Ascending aorta (tissue), 2 donors: ENCODE measurements at regions of chr13 and their contacts with region 1.

Region 1: GRCh38 chr13:51286135-51287002 is 53.1 kb upstream of the SERPINE3 start:
- DNase-seq: peak; percentile 15 to 87
- H3K4me3 ChIP-seq: no peak overlapping the region
- H3K27ac ChIP-seq: no peak overlapping the region
- H3K4me1 ChIP-seq: peaks cover 0 to 2% of the 10 kb centered on the region in 2 donors
- H3K27me3 ChIP-seq: no peaks in the 10 kb centered on the region
- CTCF ChIP-seq: peak; percentile 74 to 95 (median 88)

Region 2: DNA sequence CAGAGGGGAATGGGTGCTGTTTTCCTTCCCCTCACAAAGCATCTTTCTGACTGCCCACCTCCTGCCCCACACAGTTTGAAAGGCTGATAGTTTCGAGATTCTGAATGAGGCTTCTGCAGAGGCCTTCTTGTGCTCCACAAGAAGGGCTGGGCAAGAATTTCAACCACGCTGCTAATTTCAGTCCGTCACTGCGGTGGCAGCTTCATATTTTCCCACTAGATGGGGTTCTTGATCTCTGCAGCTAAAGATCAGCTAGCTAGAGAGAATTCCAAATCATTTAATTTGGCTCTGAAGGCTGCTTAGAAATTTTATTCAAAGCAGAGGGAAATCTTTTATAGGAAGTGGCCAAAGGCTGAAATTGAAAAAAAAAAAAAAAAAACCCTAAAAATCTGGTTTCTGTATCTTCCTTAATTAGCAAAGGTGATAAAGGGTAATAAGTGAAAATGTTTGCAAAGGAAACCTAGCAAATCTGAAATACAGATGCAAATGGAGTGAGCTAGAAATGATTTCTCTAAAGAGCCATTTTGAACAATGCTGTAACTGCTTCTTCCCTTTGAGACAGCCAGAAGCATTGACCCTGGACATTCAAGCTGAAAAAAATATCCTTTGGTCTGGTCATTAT is 137.3 kb before region 1 on chr13:
- intact Hi-C with region 1: loop called (anchors 1 kb)
- DNase-seq: no peak
- H3K4me3 ChIP-seq: no peak overlapping the region
- H3K27ac ChIP-seq: no peak overlapping the region
- H3K4me1 ChIP-seq: no peaks in the 10 kb centered on the region
- H3K27me3 ChIP-seq: no peaks in the 10 kb centered on the region
- CTCF ChIP-seq: peak in 2 of 3 experiments; percentile 40 to 67

Region 3: GRCh38 chr13:51222037-51222685 is 64.2 kb before region 1 on chr13 and contains the start of gene FAM124A:
- intact Hi-C with region 1: loop called (anchors 2 kb)
- DNase-seq: peak in 1 of 2 donors; percentile 67
- H3K4me3 ChIP-seq: peak within 1 kb of the TSS; percentile 82 to 92
- H3K27ac ChIP-seq: peak within 1 kb of the TSS in 1 of 2 donors; percentile 12
- H3K4me1 ChIP-seq: no peaks in the 10 kb centered on the region
- H3K27me3 ChIP-seq: no peaks in the 10 kb centered on the region
- CTCF ChIP-seq: peak in 1 of 3 experiments; percentile 60
- total RNA-seq, gene FAM124A: 22.4 TPM

Region 4: DNA sequence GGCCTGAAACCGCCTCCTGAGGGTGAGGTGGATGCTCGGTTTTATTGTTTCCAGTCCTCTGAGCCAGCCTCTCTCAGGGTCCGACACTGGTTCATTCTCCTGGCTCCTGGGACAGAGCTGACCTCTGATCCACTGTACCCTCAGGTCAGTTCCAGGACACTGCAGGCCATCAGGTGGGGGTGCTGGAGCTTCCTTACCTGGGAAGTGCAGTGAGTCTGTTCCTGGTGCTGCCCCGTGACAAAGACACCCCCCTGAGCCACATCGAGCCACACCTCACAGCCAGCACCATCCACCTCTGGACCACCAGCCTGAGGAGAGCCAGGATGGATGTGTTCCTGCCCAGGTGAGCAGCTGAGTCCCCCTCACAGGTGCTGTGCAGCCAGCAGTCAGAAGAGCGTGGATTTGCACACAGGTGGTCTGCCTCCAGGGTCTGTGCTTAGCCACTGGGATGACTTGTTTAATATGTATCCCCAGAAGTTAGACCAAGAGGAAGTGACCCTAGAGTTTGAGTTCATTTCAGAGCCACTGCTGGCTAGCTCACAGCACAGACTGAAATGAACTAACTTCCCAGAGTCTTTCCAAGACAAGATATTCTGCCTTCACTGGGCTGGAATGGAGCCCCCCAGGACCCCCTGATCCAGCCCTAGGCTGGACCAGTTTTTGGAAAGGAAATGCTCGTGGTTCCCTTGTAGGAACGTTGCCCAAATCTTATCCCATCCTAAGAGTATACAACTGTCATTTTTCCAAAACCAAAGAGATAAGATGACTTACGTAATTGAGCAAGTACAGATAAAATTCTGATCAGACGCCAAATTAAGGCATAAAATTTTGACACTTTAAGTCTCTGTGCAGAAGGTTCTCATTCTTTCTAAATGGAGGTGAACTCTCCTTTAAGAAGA is 61.9 kb after region 1 on chr13:
- intact Hi-C with region 1: no loop called
- DNase-seq: no peak
- H3K4me3 ChIP-seq: no peak overlapping the region
- H3K27ac ChIP-seq: no peak overlapping the region
- H3K4me1 ChIP-seq: no peaks in the 10 kb centered on the region
- H3K27me3 ChIP-seq: no peaks in the 10 kb centered on the region
- CTCF ChIP-seq: no peak

Region 5: GRCh38 chr13:51549050-51549449 is 262.7 kb after region 1 on chr13:
- intact Hi-C with region 1: no loop called
- DNase-seq: no peak
- H3K4me3 ChIP-seq: no peak overlapping the region
- H3K27ac ChIP-seq: no peak overlapping the region
- H3K4me1 ChIP-seq: no peaks in the 10 kb centered on the region
- H3K27me3 ChIP-seq: no peaks in the 10 kb centered on the region
- CTCF ChIP-seq: no peak